ENCODE measurements at regions of chrX and their contacts with region 1.

Region 1: DNA sequence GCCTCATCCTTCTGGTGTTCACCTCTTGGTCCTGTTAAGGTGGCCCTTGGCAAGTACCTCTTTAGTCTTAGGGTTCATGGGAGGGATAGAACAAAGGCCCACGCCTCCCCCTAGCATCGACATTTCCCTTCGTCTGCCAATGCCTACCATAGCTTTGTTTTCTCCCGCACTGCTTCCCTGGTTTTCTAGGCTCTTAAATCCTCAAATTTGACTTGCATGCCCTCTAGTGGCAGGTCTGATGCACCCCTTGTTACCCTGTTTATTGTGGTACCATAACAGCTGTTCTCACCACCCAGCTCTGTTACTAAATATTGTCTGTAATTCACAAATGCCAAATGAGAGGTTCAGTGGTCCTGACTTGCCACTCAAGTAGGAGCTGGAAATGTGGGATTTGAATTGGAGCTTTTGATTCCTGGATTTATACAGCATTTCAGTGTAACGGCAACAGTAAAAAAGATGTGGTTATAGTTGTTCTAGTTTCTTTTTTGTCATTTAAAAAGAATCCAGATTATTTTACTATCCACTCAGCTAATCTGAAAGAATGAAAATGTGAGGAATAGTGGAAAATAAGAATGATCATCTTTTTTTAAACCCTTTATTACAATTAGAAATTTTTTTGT is 100.1 kb downstream of the REPS2 start:
- DNase-seq: peak; percentile 75
- H3K4me3 ChIP-seq: no peak overlapping the region
- H3K27ac ChIP-seq: no peak overlapping the region
- H3K4me1 ChIP-seq: peaks cover 0 to 5% (median 0%) of the 10 kb centered on the region in 4 donors
- H3K27me3 ChIP-seq: no peaks in the 10 kb centered on the region
- CTCF ChIP-seq: peak; percentile 56 to 72 (median 61)
- EP300 ChIP-seq: no peak
- POLR2A ChIP-seq: no peak

Region 2: GRCh38 chrX:16594490-16594889 is 452.1 kb before region 1 on chrX:
- intact Hi-C with region 1: no loop called
- DNase-seq: no peak
- H3K4me3 ChIP-seq: no peak overlapping the region
- H3K27ac ChIP-seq: no peak overlapping the region
- H3K4me1 ChIP-seq: no peaks in the 10 kb centered on the region
- H3K27me3 ChIP-seq: no peaks in the 10 kb centered on the region
- CTCF ChIP-seq: no peak
- EP300 ChIP-seq: no peak
- POLR2A ChIP-seq: no peak

Region 3: DNA sequence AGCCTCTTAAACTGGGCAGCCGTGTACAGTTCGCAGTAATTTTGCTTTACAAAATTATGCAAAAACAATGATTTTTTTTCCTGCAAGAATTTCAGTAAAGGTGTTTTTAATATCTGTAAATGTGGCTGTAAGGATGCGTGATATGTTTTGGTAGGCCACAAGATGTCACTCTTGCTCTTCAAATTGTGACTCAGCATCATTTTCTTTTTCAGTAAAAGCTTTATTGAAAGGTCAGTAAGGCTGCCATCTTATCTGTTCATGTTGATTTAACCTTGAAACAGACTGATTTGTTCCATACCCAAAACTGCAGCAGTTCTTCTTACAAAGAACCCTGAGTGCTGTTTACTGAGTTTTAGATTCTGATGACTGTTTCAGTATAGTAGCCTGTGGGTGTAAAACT is 220.4 kb before region 1 on chrX:
- intact Hi-C with region 1: loop called (anchors 2 kb)
- DNase-seq: no peak
- H3K4me3 ChIP-seq: no peak overlapping the region
- H3K27ac ChIP-seq: peak overlapping the region in 3 of 4 donors; percentile 17 to 84 (median 75)
- H3K4me1 ChIP-seq: peaks cover 0 to 24% (median 3%) of the 10 kb centered on the region in 4 donors
- H3K27me3 ChIP-seq: no peaks in the 10 kb centered on the region
- CTCF ChIP-seq: peak in 3 of 4 experiments; percentile 19 to 29 (median 27)
- EP300 ChIP-seq: no peak
- POLR2A ChIP-seq: no peak

Region 4: DNA sequence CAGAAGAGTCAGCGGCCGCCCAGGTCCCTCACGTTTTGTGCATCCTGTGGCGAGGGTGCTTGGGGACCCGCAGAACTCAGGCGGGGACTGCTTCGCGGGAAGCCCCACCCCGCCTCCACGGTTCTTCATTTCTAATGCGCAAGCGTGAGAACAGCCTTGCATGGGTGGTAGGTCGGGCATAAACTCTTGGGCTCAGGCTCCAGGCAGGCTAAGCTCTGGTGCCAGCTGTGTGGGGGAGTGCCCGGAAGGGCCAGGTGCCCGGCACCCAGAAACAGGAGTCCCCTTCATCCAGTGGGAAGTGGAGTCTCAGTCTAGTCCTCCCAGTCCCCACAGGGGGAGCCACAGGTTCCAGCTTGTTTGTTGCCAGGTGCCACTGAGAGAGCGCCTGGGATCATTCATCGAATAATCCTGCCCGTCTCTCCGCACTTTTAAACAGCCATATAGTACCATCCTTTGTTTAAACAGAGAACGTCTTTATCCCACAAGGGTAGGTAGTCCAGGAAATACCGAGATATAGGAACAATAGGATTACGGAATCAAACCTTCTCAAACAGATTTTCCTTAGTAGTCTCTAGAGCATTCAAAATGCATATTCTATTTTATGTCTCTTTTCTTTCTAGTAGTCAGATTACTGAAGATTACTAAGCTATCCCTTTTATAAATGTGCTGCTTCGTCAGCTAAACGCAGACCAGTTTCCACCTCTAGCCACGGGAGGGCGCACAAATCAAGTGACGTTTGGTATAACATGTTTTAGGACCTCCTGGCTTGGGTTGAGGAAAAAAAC is 163.7 kb before region 1 on chrX:
- intact Hi-C with region 1: loop called (anchors 2 kb)
- DNase-seq: peak; percentile 79
- H3K4me3 ChIP-seq: peak overlapping the region; percentile 25 to 48 (median 42)
- H3K27ac ChIP-seq: peak overlapping the region; percentile 69 to 76 (median 73)
- H3K4me1 ChIP-seq: peaks cover 0 to 6% (median 2%) of the 10 kb centered on the region in 4 donors
- H3K27me3 ChIP-seq: no peaks in the 10 kb centered on the region
- CTCF ChIP-seq: peak in 3 of 4 experiments; percentile 38 to 60 (median 50)
- EP300 ChIP-seq: no peak
- POLR2A ChIP-seq: no peak

Region 5: GRCh38 chrX:16946361-16946964 is 100.1 kb before region 1 on chrX and contains the start of gene REPS2:
- intact Hi-C with region 1: loop called (anchors 2 kb)
- DNase-seq: peak; percentile 88
- H3K4me3 ChIP-seq: peak within 1 kb of the TSS; percentile 42 to 63 (median 62)
- H3K27ac ChIP-seq: peak within 1 kb of the TSS; percentile 14 to 51 (median 37)
- H3K4me1 ChIP-seq: peaks cover 0 to 6% (median 0%) of the 10 kb centered on the region in 4 donors
- H3K27me3 ChIP-seq: peaks cover 0 to 5% (median 0%) of the 10 kb centered on the region in 3 donors
- CTCF ChIP-seq: no peak
- EP300 ChIP-seq: no peak
- POLR2A ChIP-seq: no peak
- total RNA-seq, gene REPS2: 3.9 to 10.9 (median 5.5) TPM

Measured in sigmoid colon (tissue), 7 donors.